AG04450 (cell line): ENCODE measurements at regions of chr17 and their contacts with region 1.

Region 1: GRCh38 chr17:75114552-75115314 is 5.0 kb downstream of the ARMC7 start:
- DNase-seq: no peak
- H3K4me3 ChIP-seq: peak overlapping the region; percentile 62
- H3K27ac ChIP-seq: peak overlapping the region; percentile 21
- H3K27me3 ChIP-seq: no peaks in the 10 kb centered on the region
- CTCF ChIP-seq: no peak

Region 2: DNA sequence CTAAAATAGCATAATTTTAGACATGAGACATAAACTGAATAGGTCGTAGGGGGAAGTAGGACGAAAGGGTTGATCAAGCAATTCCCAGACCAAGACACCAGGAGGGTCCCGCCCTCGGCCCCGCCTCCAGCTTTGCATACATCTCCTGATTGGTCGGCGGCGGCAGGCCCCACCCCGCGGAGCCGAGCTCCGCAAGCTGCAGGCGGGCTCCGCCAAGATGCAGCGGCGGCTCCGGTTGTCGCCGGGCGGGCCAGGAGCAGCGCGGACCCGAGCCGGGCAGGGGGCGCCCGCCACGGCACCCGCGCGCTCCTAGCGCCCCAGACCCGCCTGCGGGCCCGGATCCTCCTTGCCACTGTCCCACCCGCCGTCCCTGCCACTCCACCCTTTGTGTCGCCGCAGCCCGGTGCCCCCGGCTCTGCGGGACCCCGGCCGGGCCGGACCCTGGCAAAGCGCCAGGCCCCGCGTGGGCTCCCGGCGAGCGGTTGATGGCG is 127.3 kb before region 1 on chr17 and contains the start of gene CDR2L:
- CTCF ChIA-PET with region 1: interaction called, 10 read pairs
- POLR2A ChIA-PET with region 1: interaction called, 4 read pairs
- DNase-seq: peak; percentile 75
- H3K4me3 ChIP-seq: peak within 1 kb of the TSS; percentile 78
- H3K27ac ChIP-seq: peak within 1 kb of the TSS; percentile 97
- H3K27me3 ChIP-seq: no peaks in the 10 kb centered on the region
- CTCF ChIP-seq: no peak
- polyA plus RNA-seq, gene CDR2L: 8.4 and 11.4 TPM in 2 replicates